IMR-90 (cell line): ENCODE measurements at regions of chr19 and their contacts with region 1.

Region 1: DNA sequence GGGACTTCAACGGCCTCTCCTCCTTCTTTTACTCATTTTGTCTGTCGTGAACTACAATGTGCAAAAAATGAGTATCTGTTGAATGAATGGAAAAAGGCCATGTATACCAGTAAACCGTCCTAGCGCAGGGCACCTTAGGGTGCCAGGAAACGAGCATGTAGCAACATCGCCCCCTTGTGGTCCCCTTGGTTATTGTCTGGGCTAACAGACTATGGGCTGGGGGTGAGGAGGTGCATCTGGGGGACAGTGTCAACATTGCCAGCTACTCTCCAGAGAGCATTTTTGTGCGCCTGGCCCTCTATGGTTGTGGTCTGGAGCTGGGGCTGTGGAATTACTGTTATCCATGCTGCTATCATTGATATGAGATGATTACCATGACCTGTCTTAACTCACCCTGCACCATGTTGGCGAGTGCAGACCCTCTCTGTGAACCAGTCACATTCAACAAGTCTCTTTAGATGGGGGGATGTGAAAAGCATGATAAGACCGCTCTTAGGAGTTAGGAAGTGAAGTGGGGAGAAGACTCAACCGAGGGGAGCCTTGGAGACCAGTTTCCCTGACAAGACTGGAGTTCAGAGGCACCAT is 22.8 kb upstream of the SIGLEC11 start:
- DNase-seq: peak; percentile 37
- ATAC-seq: peak; percentile 58
- H3K4me3 ChIP-seq: no peak overlapping the region
- H3K27ac ChIP-seq: no peak overlapping the region
- H3K4me1 ChIP-seq: no peaks in the 10 kb centered on the region
- H3K27me3 ChIP-seq: no peaks in the 10 kb centered on the region
- CTCF ChIP-seq: peak; percentile 73
- POLR2A ChIP-seq: no peak
- RAD21 ChIP-seq: peak; percentile 79

Region 2: DNA sequence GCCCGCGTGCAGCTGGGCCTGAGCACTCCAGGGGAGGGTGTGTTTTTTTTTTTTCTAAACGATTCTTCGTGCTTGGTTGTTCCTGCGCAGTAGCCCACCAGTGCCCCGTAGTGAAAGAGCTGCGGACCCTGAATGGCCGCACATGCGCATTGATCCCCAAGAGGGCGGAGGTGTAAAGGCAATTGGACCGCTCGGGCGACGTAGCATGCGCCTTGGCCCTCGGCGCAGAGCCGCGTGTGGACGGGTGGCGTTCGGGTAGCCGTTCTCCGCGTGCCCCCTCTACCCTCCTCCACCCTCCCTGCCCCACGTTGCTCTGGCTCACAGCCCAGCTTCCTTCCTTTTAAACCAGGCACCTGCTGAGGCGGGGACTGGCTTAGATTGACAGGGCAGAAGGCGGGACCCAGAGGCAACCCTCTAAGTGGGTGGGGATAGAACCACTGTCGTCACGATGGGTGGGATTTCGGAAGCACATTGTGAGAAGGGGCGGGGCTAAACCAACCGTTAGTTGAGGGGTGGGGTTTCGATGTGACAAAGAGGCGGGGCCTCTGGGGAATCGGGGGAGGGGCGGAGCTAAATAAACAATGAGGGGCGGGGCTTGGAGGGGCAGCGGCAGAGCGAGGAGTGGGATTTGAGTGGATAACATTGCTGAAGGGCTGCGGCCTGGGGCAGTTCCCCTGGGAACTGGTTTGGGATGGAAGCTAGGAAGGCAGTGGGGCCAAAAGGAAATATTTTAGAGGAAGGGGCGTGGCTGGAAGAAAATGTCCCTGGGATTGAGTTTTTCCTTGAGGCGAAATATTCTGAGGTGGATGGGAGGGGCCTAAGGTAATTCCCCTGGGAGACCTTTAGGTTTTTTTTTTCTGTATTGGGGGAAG is 53.9 kb before region 1 on chr19:
- CTCF ChIA-PET with region 1: no interaction called
- POLR2A ChIA-PET with region 1: no interaction called
- dilution Hi-C with region 1: no loop called
- in situ Hi-C with region 1: loop called (anchors 10 kb)
- intact Hi-C with region 1: no loop called
- DNase-seq: peak; percentile 97
- ATAC-seq: peak; percentile 93
- H3K4me3 ChIP-seq: peak overlapping the region; percentile 80
- H3K27ac ChIP-seq: peak overlapping the region; percentile 75
- H3K4me1 ChIP-seq: peaks cover 4% of the 10 kb centered on the region
- H3K27me3 ChIP-seq: no peaks in the 10 kb centered on the region
- CTCF ChIP-seq: no peak
- POLR2A ChIP-seq: no peak; the same call in 1 of the 2 replicates
- RAD21 ChIP-seq: no peak

Region 3: GRCh38 chr19:49937750-49938381 is 45.9 kb before region 1 on chr19:
- CTCF ChIA-PET with region 1: interaction called, 3 read pairs
- POLR2A ChIA-PET with region 1: no interaction called
- dilution Hi-C with region 1: no loop called
- in situ Hi-C with region 1: loop called (anchors 10 kb)
- intact Hi-C with region 1: loop called (anchors 1 kb)
- DNase-seq: peak; percentile 61
- ATAC-seq: peak; percentile 99
- H3K4me3 ChIP-seq: 0 out of 2 replicates have a peak overlapping the region, but pooled peaks have one; percentile 17
- H3K27ac ChIP-seq: no peak overlapping the region
- H3K4me1 ChIP-seq: no peaks in the 10 kb centered on the region
- H3K27me3 ChIP-seq: no peaks in the 10 kb centered on the region; the same call in 1 of the 2 replicates
- CTCF ChIP-seq: peak; percentile 98
- POLR2A ChIP-seq: peak; percentile 63; the same call in 1 of the 2 replicates
- RAD21 ChIP-seq: peak; percentile 98

Region 4: GRCh38 chr19:50025024-50025789 is 41.5 kb after region 1 on chr19 and contains the start of gene VRK3:
- CTCF ChIA-PET with region 1: no interaction called
- POLR2A ChIA-PET with region 1: no interaction called
- dilution Hi-C with region 1: no loop called
- in situ Hi-C with region 1: no loop called
- intact Hi-C with region 1: loop called (anchors 1 kb)
- DNase-seq: peak; percentile 100
- ATAC-seq: peak; percentile 94
- H3K4me3 ChIP-seq: peak within 1 kb of the TSS; percentile 87
- H3K27ac ChIP-seq: peak within 1 kb of the TSS; percentile 83
- H3K4me1 ChIP-seq: no peaks in the 10 kb centered on the region
- H3K27me3 ChIP-seq: no peaks in the 10 kb centered on the region
- CTCF ChIP-seq: peak; percentile 11; the same call in 1 of the 2 replicates
- POLR2A ChIP-seq: peak; percentile 83
- RAD21 ChIP-seq: no peak
- total RNA-seq, gene VRK3: 20.6 and 28.7 TPM in 2 replicates